CD8-positive, alpha-beta T cell (primary cell): ENCODE measurements at regions of chr5 and their contacts with region 1.

Region 1: DNA sequence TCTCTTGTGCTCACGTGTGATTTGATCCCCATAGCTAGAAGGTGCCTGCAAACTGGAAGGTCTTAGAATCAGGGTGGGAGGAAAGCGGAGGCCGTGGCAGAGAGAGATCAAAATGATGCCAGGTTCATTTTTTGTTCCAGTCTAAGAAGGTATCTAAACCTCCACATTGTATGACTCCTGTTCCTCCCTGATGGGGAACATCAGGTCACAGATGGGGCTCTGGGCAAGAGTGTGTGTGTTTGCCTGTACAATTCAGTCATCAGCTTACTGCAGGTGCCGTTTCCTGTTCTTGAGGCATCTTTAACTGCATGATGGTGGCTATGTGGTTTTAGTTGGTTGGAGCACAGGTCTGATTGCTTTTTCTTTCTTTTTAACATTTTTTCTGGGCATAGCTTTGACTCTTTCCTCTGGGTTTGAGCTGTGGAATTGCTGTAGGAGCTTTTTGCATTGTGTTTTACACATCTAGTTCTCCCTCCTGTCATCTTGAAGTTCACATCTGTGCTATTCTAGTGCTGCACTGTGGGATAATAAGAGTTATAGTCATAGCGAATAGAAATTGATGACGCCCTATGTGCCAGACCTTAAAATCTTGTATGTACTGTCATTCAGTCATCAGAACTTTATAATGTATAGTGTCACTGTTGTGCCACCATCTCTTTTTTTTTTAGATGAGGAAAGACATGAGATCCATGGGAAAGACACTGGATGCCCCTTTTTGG is 30.8 kb downstream of the ARHGAP26 start:
- DNase-seq: peak in 8 of 9 experiments; percentile 25 to 83 (median 60)
- ATAC-seq: peak; percentile 77
- H3K4me3 ChIP-seq: peak overlapping the region; percentile 4 to 32
- H3K4me3 Mint-ChIP-seq: peak overlapping the region; percentile 78
- H3K27ac ChIP-seq: peak overlapping the region; percentile 41 to 70
- H3K27ac Mint-ChIP-seq: peak overlapping the region; percentile 92
- H3K4me1 ChIP-seq: peaks cover 62% of the 10 kb centered on the region
- H3K4me1 Mint-ChIP-seq: peaks cover 83% of the 10 kb centered on the region
- H3K27me3 ChIP-seq: no peaks in the 10 kb centered on the region
- H3K27me3 Mint-ChIP-seq: no peaks in the 10 kb centered on the region
- CTCF ChIP-seq: no peak

Region 2: DNA sequence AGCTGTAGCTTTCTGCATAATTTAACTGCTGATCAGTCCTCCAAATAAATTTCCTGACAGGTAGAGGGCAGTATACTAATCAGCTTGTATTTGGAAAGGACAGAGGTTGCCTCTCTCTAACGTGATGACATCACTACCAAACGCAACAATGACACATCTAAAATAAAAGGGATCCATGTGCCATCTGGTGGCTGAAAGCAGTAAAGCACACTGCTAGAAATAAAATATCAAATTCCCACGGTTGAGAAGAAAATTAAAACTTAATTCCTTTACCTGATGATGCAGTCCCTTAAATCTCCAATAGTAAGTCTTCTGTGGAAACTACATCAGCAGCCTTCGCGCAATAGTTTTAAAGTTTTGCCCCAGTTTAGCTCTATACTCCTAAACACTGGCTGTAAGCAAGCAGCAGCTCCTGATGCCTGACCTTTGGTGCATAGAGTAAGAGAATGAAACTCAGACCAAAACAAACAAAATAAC is 1236.7 kb before region 1 on chr5:
- CTCF ChIA-PET with region 1: no interaction called
- POLR2A ChIA-PET with region 1: no interaction called
- intact Hi-C with region 1: no loop called
- DNase-seq: peak; percentile 17 to 95 (median 63)
- ATAC-seq: peak; percentile 98
- H3K4me3 ChIP-seq: no peak overlapping the region
- H3K4me3 Mint-ChIP-seq: no peak overlapping the region
- H3K27ac ChIP-seq: peak overlapping the region in 1 of 2 experiments; percentile 76
- H3K27ac Mint-ChIP-seq: peak overlapping the region; percentile 78
- H3K4me1 ChIP-seq: no peaks in the 10 kb centered on the region
- H3K4me1 Mint-ChIP-seq: peaks cover 33% of the 10 kb centered on the region
- H3K27me3 ChIP-seq: no peaks in the 10 kb centered on the region
- H3K27me3 Mint-ChIP-seq: no peaks in the 10 kb centered on the region
- CTCF ChIP-seq: peak; percentile 92

Region 3: GRCh38 chr5:142364251-142365145 is 436.4 kb before region 1 on chr5:
- CTCF ChIA-PET with region 1: no interaction called
- POLR2A ChIA-PET with region 1: no interaction called
- intact Hi-C with region 1: loop called in 1 of 2 experiments (anchors 10 kb)
- DNase-seq: no peak
- ATAC-seq: no peak
- H3K4me3 ChIP-seq: no peak overlapping the region
- H3K4me3 Mint-ChIP-seq: no peak overlapping the region
- H3K27ac ChIP-seq: no peak overlapping the region
- H3K27ac Mint-ChIP-seq: no peak overlapping the region
- H3K4me1 ChIP-seq: peaks cover 5% of the 10 kb centered on the region
- H3K4me1 Mint-ChIP-seq: peaks cover 17% of the 10 kb centered on the region
- H3K27me3 ChIP-seq: no peaks in the 10 kb centered on the region
- H3K27me3 Mint-ChIP-seq: peaks cover 3% of the 10 kb centered on the region
- CTCF ChIP-seq: no peak

Region 4: DNA sequence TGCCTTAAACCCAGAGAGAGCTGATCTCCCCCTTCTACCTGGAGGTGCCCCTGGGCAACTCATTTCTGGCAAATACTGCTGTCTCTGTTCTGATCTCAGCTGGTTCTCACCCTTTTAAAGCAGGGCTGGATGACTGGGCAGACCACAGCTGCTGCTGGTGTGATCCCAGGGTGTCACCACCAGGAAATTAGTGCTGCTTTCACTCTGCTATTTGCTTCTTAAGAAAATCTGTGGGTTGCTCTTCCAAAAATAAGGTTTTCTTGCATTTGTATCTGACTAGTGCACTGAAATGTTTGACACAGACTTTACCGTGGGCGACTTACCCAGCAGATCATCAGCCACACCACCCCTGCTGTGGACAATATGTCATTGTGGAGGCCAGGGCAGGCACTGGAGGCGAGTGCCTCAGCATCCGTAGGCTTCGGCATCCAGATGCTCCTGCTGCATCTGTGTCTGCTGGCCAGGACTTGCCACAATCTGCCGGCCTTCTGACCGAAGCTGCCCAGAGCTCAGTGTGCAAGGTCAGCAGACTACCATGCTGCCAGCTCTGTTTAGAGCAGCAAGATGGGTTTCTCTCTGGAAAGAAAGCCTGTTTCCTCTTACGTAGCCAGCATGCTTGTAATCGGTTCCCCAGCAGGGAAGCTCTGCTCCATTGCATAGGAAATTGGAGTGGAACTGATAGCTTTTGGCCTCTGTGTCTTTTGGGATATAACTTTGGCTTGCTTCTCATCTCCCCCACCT is 17.2 kb before region 1 on chr5:
- CTCF ChIA-PET with region 1: interaction called, 21 read pairs
- POLR2A ChIA-PET with region 1: interaction called, 48 read pairs
- intact Hi-C with region 1: loop called in 1 of 2 experiments (anchors 1 kb)
- DNase-seq: peak in 7 of 9 experiments; percentile 16 to 80 (median 52)
- ATAC-seq: peak; percentile 60
- H3K4me3 ChIP-seq: peak overlapping the region in 1 of 2 experiments; percentile 47
- H3K4me3 Mint-ChIP-seq: peak overlapping the region; percentile 77
- H3K27ac ChIP-seq: peak overlapping the region; percentile 16 to 72
- H3K27ac Mint-ChIP-seq: peak overlapping the region; percentile 77
- H3K4me1 ChIP-seq: peaks cover 59% of the 10 kb centered on the region
- H3K4me1 Mint-ChIP-seq: peaks cover 79% of the 10 kb centered on the region
- H3K27me3 ChIP-seq: no peaks in the 10 kb centered on the region
- H3K27me3 Mint-ChIP-seq: no peaks in the 10 kb centered on the region
- CTCF ChIP-seq: no peak

Region 5: DNA sequence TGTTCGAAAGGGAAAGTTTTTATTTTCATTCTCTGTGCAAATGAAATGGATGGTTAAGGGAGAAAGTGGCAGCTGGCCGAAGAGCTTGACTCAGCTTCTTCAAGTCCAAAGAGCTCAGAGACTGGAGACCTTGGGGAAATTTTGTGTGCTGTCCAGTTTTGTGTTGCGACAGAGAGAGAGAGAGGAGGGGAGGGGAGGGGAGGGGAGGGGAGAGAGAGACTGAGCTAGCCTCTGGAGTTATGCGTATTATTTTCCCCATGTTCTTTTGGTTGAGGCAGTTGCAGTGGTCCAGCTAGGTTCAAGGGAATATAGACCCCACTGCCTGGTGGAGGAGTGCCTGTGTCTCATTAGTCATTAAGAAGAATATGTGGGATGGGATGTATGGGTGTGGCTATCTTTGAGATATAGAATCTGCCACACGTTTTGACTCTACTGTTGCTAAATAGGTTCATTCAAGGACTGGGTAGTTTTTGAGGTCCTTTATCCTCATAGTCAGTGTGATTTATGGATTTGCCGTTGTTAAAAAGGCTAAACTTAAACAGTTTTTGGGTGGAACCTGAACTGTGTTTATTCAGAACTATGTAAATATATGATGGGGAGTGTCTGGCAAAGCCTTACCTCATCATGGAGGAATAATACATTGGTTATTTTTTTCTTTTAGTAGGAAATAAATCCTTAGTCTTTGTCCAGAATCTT is 38.9 kb after region 1 on chr5:
- CTCF ChIA-PET with region 1: no interaction called
- POLR2A ChIA-PET with region 1: interaction called, 3 read pairs
- intact Hi-C with region 1: loop called in 1 of 2 experiments (anchors 5 kb)
- DNase-seq: no peak
- ATAC-seq: no peak
- H3K4me3 ChIP-seq: no peak overlapping the region
- H3K4me3 Mint-ChIP-seq: no peak overlapping the region
- H3K27ac ChIP-seq: no peak overlapping the region
- H3K27ac Mint-ChIP-seq: no peak overlapping the region
- H3K4me1 ChIP-seq: peaks cover 2% of the 10 kb centered on the region
- H3K4me1 Mint-ChIP-seq: peaks cover 75% of the 10 kb centered on the region
- H3K27me3 ChIP-seq: no peaks in the 10 kb centered on the region
- H3K27me3 Mint-ChIP-seq: no peaks in the 10 kb centered on the region
- CTCF ChIP-seq: no peak

Region 6: GRCh38 chr5:142865414-142866045 is 64.6 kb after region 1 on chr5:
- CTCF ChIA-PET with region 1: interaction called, 7 read pairs
- POLR2A ChIA-PET with region 1: interaction called, 4 read pairs
- intact Hi-C with region 1: loop called in 1 of 2 experiments (anchors 2 kb)
- DNase-seq: no peak
- ATAC-seq: no peak
- H3K4me3 ChIP-seq: no peak overlapping the region
- H3K4me3 Mint-ChIP-seq: no peak overlapping the region
- H3K27ac ChIP-seq: no peak overlapping the region
- H3K27ac Mint-ChIP-seq: peak overlapping the region; percentile 49
- H3K4me1 ChIP-seq: peaks cover 21% of the 10 kb centered on the region
- H3K4me1 Mint-ChIP-seq: peaks cover 72% of the 10 kb centered on the region
- H3K27me3 ChIP-seq: no peaks in the 10 kb centered on the region
- H3K27me3 Mint-ChIP-seq: no peaks in the 10 kb centered on the region
- CTCF ChIP-seq: no peak